Caco-2 (cell line): ENCODE measurements at regions of chr18 and their contacts with region 1.

Region 1: GRCh38 chr18:12934454-12935071 is 13.2 kb upstream of the SEH1L start:
- DNase-seq: peak; percentile 86
- H3K4me3 ChIP-seq: no peak overlapping the region
- H3K4me3 Mint-ChIP-seq: peak overlapping the region; percentile 2
- H3K27ac Mint-ChIP-seq: peak overlapping the region; percentile 16
- H3K4me1 ChIP-seq: peaks cover 29% of the 10 kb centered on the region; the same call in 1 of the 2 replicates
- H3K4me1 Mint-ChIP-seq: peaks cover 20% of the 10 kb centered on the region
- H3K27me3 ChIP-seq: no peaks in the 10 kb centered on the region
- H3K27me3 Mint-ChIP-seq: no peaks in the 10 kb centered on the region
- CTCF ChIP-seq: peak; percentile 85 to 96

Region 2: DNA sequence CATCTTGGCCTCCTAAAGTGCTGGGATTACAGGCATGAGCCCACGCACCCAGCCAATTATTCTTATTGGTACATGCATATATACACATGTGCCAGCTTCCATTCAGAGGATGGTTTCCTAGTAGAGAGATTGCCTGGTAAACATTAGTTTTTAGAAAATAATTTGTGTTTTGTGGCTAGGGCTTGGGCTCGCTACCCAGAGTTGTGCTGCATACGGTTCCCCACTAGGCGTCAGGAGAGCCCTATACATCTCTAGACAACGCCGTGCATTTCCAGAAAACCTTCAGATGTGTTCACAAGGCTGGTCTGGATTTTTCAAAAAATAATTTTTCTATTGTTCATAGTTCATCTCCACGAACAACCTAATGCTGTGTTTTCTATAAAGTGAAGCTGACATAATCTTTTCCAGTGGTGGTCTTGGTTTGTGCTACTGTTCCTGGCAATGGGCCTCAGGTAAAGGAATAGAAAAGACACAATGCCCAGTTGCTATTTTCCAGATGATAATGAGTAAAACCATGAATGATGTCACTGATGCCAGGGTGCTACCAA is 542.9 kb before region 1 on chr18:
- CTCF ChIA-PET with region 1: interaction called, 4 read pairs
- POLR2A ChIA-PET with region 1: no interaction called
- intact Hi-C with region 1: loop called (anchors 1 kb)
- DNase-seq: peak; percentile 54 to 66
- H3K4me3 ChIP-seq: no peak overlapping the region
- H3K4me3 Mint-ChIP-seq: no peak overlapping the region
- H3K27ac Mint-ChIP-seq: no peak overlapping the region
- H3K4me1 ChIP-seq: peaks cover 10% of the 10 kb centered on the region; the same call in 1 of the 2 replicates
- H3K4me1 Mint-ChIP-seq: peaks cover 12% of the 10 kb centered on the region
- H3K27me3 ChIP-seq: no peaks in the 10 kb centered on the region
- H3K27me3 Mint-ChIP-seq: no peaks in the 10 kb centered on the region
- CTCF ChIP-seq: peak; percentile 88 to 96

Region 3: DNA sequence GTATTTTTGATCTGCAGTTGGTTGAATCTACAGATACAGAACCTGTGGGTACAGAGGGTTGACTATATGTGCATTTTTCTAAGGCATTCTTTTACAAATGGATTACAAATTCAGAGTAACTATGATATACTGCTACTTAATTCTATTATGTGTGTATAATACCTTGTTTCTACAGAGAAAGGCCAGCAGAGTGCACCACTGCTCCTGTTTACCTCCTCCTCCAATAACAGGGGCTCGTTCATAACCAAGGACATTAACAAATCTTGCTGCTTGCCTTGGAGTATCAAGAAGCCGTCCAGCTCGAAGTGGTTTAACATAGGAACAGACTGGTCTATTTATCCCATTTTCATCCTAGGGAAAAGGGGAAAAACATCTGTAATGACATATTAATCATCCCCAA is 248.5 kb before region 1 on chr18:
- CTCF ChIA-PET with region 1: no interaction called
- POLR2A ChIA-PET with region 1: no interaction called
- intact Hi-C with region 1: loop called (anchors 1 kb)
- DNase-seq: no peak
- H3K4me3 ChIP-seq: no peak overlapping the region
- H3K4me3 Mint-ChIP-seq: no peak overlapping the region
- H3K27ac Mint-ChIP-seq: no peak overlapping the region
- H3K4me1 ChIP-seq: no peaks in the 10 kb centered on the region
- H3K4me1 Mint-ChIP-seq: no peaks in the 10 kb centered on the region
- H3K27me3 ChIP-seq: no peaks in the 10 kb centered on the region
- H3K27me3 Mint-ChIP-seq: no peaks in the 10 kb centered on the region
- CTCF ChIP-seq: no peak

Region 4: DNA sequence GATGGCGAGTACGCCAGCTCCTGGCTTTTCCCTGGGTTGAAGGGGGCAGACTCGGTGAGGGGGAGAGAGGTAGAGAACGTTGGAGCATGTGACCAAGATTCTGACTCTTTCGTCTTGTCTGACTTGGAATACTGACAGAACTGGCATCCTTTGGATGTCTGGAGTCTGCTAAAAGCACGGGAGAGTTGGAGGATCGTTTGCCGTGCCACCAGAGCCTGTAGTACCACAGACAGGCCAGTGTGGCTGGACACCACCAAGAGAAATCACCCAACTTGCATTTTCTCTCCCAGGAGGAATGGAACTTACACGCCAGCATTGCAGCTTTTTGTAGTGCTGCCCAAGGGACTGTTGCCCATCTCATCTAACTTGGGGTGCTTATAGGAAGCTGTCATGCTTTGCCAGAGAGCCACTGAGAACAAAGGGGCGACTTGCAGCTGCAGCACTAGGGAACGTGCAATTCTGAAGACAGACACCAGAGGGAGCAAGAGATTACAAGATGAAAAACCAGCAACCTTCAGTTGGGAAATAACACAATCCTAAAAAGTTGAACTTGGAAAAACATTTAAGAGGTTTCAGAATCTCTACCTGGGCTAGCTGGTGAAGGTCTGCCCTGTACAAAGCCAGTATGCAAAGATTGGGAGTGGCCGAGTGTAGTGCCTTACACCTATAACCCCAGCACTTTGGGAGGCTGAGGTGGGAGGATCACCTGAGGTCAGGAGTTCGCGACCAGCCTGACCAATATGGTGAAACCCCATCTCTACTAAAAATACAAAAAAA is 207.6 kb before region 1 on chr18:
- CTCF ChIA-PET with region 1: interaction called, 10 read pairs
- POLR2A ChIA-PET with region 1: interaction called, 3 read pairs
- intact Hi-C with region 1: loop called (anchors 1 kb)
- DNase-seq: peak; percentile 68 to 82
- H3K4me3 ChIP-seq: no peak overlapping the region
- H3K4me3 Mint-ChIP-seq: no peak overlapping the region
- H3K27ac Mint-ChIP-seq: peak overlapping the region; percentile 82
- H3K4me1 ChIP-seq: peaks cover 27% of the 10 kb centered on the region
- H3K4me1 Mint-ChIP-seq: peaks cover 16% of the 10 kb centered on the region
- H3K27me3 ChIP-seq: no peaks in the 10 kb centered on the region
- H3K27me3 Mint-ChIP-seq: no peaks in the 10 kb centered on the region
- CTCF ChIP-seq: peak; percentile 85 to 94

Region 5: DNA sequence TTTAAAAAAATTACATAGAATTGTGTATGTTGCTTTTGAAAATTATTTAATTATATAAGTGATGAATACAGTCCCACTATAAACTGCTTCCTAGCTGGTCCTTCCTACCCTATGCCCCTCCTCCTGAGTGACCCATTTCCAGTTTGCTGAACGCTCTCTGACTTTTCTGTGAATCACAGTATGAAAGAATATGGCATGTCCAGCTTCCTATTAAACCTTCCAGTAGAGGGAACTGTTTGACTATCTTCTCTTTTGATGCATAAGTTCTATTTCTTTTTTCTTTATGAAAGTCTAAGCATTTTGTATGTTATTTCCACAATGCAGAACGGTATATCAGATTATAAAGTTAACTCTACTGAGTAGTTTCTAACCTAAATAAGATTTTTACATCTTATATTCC is 190.5 kb before region 1 on chr18:
- CTCF ChIA-PET with region 1: interaction called, 16 read pairs
- POLR2A ChIA-PET with region 1: no interaction called
- intact Hi-C with region 1: loop called (anchors 1 kb)
- DNase-seq: peak in 1 of 2 experiments; percentile 38
- H3K4me3 ChIP-seq: no peak overlapping the region
- H3K4me3 Mint-ChIP-seq: no peak overlapping the region
- H3K27ac Mint-ChIP-seq: no peak overlapping the region
- H3K4me1 ChIP-seq: peaks cover 8% of the 10 kb centered on the region; the same call in 1 of the 2 replicates
- H3K4me1 Mint-ChIP-seq: no peaks in the 10 kb centered on the region
- H3K27me3 ChIP-seq: no peaks in the 10 kb centered on the region
- H3K27me3 Mint-ChIP-seq: no peaks in the 10 kb centered on the region
- CTCF ChIP-seq: peak; percentile 31 to 49

Region 6: DNA sequence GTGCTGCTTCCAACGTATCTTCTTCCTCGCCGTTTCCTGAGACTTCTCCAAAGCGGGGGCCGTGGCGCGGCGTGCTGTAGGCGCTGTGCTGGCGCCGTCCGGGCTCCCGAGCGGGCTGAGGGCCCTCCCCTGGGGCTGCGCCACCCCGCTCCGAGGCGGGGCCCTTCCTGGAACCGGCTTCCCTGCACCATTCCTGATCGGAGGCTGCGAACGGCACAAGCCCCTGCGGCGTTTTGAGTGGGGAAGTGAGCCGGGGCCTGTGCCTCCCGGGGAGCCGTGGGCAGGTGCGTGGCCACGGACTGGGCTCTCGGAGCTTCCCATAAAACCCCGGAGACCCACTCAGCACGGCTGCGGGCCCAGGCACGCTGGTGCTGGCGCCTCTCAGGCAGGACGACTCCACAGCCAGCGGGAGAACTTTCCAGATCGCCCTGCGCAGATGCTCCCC is 157.0 kb before region 1 on chr18:
- CTCF ChIA-PET with region 1: interaction called, 18 read pairs
- POLR2A ChIA-PET with region 1: no interaction called
- intact Hi-C with region 1: no loop called
- DNase-seq: peak; percentile 52 to 71
- H3K4me3 ChIP-seq: peak overlapping the region; percentile 53
- H3K4me3 Mint-ChIP-seq: peak overlapping the region; percentile 83
- H3K27ac Mint-ChIP-seq: peak overlapping the region; percentile 86
- H3K4me1 ChIP-seq: 0 out of 2 replicates have a peak, but pooled peaks cover 6% of the 10 kb centered on the region
- H3K4me1 Mint-ChIP-seq: no peaks in the 10 kb centered on the region
- H3K27me3 ChIP-seq: no peaks in the 10 kb centered on the region
- H3K27me3 Mint-ChIP-seq: no peaks in the 10 kb centered on the region
- CTCF ChIP-seq: no peak

Region 7: DNA sequence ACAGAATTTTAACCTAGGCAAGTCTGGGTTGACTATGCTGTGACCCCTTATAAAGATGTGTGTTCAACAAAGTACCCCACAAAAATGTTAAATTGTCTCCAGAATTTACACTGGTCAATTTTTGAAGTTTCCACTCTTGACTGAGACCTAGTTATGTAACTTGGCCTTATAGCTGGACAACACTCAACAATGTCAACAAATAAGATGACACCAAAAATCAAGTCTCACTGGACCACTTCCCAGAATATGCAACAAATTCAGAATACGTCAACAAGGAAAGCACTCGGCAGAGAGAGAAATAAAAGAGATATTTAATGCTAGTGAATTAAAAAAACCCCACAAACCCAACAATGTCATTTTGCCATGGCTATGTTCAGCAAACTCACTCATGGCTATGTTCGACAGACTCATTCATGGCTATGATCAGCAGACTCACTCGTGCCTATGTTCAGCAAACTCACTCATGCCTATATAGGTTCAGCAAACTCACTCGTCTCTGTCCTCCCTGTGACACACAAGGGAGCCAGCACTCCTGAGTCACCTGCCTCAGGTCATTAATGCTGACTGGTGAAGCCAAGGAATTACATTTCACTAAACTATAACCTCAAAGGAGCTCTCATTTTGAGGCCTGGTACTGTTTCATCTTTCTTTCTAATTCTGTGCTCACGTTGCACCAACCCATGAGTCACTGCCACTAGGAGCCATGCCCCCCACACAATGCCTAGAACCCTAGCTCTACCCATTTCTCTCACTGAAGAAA is 123.2 kb before region 1 on chr18:
- CTCF ChIA-PET with region 1: no interaction called
- POLR2A ChIA-PET with region 1: no interaction called
- intact Hi-C with region 1: no loop called
- DNase-seq: no peak
- H3K4me3 ChIP-seq: no peak overlapping the region
- H3K4me3 Mint-ChIP-seq: no peak overlapping the region
- H3K27ac Mint-ChIP-seq: no peak overlapping the region
- H3K4me1 ChIP-seq: no peaks in the 10 kb centered on the region
- H3K4me1 Mint-ChIP-seq: no peaks in the 10 kb centered on the region
- H3K27me3 ChIP-seq: no peaks in the 10 kb centered on the region
- H3K27me3 Mint-ChIP-seq: no peaks in the 10 kb centered on the region
- CTCF ChIP-seq: no peak

Region 8: GRCh38 chr18:12890506-12890905 is 44.1 kb before region 1 on chr18:
- CTCF ChIA-PET with region 1: interaction called, 23 read pairs
- POLR2A ChIA-PET with region 1: no interaction called
- intact Hi-C with region 1: loop called (anchors 1 kb)
- DNase-seq: peak in 1 of 2 experiments; percentile 46
- H3K4me3 ChIP-seq: no peak overlapping the region
- H3K4me3 Mint-ChIP-seq: no peak overlapping the region
- H3K27ac Mint-ChIP-seq: no peak overlapping the region
- H3K4me1 ChIP-seq: no peaks in the 10 kb centered on the region
- H3K4me1 Mint-ChIP-seq: peaks cover 8% of the 10 kb centered on the region
- H3K27me3 ChIP-seq: no peaks in the 10 kb centered on the region
- H3K27me3 Mint-ChIP-seq: no peaks in the 10 kb centered on the region
- CTCF ChIP-seq: peak; percentile 32 to 57